Stomach (tissue), 19 donors: ENCODE measurements at regions of chr1 and their contacts with region 1.

Region 1: GRCh38 chr1:180252638-180253536 is 22.8 kb downstream of the LHX4 start:
- DNase-seq: peak; percentile 69 to 78
- H3K4me3 ChIP-seq: no peak overlapping the region
- H3K27ac ChIP-seq: no peak overlapping the region
- H3K4me1 ChIP-seq: no peaks in the 10 kb centered on the region
- H3K27me3 ChIP-seq: peaks cover 8 to 73% (median 28%) of the 10 kb centered on the region in 3 donors
- CTCF ChIP-seq: peak in 5 of 7 experiments; percentile 54 to 74 (median 67)
- EP300 ChIP-seq: no peak
- POLR2A ChIP-seq: no peak

Region 2: GRCh38 chr1:180482425-180483275 is 229.8 kb after region 1 on chr1:
- intact Hi-C with region 1: loop called (anchors 10 kb)
- DNase-seq: peak in 1 of 2 donors; percentile 72
- H3K4me3 ChIP-seq: no peak overlapping the region
- H3K27ac ChIP-seq: no peak overlapping the region
- H3K4me1 ChIP-seq: peaks cover 0 to 10% (median 5%) of the 10 kb centered on the region in 4 donors
- H3K27me3 ChIP-seq: no peaks in the 10 kb centered on the region
- CTCF ChIP-seq: peak in 5 of 7 experiments; percentile 23 to 73 (median 63)
- EP300 ChIP-seq: no peak
- POLR2A ChIP-seq: no peak